ENCODE measurements at regions of chr12 and their contacts with region 1.

Region 1: GRCh38 chr12:39103552-39104165 is 198.3 kb upstream of the CPNE8 start:
- DNase-seq: peak in 16 of 42 donors; percentile 7 to 72 (median 42)

Region 2: DNA sequence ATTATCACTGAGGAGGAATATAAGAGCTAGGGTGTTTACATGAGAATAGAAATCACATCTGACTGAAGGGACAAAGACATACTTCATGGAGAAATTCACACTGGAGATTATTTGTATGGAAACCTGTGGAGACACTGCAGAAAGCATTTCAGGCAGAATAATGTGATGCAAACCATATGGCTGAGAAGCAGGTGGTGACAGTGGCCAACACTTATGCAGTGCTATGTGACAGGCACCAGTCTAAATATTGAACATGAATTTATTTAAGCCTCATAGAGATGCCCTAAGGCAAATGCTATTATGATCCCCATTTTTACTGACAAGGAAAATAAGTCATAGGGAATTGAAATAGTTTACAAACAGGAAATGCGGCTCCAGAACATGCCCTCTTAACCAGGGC is 770.8 kb before region 1 on chr12:
- intact Hi-C with region 1: loop called (anchors 10 kb)
- DNase-seq: no peak

Region 3: DNA sequence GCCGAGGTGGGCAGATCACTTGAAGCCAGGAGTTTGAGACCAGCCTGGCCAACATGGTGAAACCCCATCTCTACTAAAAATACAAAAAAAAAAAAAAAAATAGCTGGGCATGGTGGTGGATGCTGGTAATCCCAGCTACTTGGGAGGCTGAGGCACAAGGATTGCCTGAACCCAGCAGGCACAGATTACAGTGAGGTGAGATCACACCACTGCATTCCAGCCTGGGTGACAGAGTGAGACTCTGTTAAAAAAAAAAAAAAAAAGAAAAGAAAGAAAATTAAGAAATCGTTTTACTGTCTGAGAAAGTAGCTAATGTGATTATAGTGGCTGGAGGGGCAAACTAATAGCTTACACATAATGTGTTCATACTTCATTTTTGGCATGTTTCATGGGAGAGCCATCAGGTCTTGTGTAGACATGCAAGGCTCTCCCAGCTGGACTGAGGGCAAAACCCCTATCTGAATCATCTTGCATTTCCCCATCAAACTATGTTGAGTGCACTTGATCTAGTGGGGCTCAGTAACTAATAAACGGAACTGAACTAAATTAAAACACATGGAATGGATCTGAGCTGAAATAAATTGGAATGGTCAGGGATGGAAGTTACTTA is 323.1 kb after region 1 on chr12:
- intact Hi-C with region 1: no loop called
- DNase-seq: no peak